SK-MEL-5 (cell line): ENCODE measurements at regions of chr1 and their contacts with region 1.

Region 1: DNA sequence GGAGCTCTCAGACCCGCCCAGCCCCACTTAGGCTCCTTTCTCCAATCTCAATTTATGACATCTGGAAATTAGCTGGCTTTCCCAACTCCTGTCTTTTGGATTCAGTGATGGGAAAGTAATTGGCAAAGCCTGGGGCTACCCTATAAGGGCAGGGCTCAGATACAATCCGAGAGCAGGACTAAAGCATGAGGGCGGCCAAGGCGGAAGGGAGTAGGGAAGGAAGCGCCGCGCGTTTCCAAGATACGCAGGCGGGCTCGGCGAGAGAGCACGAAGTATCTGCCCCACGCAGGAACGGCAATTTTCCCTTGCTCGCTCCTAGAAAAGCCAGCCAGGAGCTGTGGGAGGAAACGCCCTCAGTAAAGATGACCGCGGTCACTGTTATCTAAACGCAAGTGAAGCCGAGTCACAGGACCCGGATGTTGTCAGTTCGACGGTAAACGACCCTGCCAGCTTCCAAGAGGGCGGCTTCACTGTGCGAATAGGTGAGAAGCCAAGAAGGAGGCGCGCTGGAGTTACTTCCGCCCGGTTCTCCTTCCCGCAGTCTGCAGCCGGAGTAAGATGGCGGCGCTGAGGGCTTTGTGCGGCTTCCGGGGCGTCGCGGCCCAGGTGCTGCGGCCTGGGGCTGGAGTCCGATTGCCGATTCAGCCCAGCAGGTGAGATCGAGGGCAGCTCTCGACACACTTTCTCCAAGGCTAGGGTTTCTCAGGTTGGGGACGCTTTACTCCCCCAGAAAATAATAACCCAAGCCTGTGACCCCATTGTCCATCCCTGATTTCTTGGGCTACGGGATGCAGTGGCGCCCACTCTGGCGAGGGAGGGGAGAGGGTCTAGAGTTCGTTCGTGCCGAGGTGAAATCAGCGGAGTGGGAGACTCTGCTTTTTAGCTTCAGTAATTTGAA is at the start of gene NDUFS2:
- DNase-seq: peak; percentile 99
- total RNA-seq, gene NDUFS2: 134 and 147 TPM in 2 replicates

Region 2: GRCh38 chr1:161399257-161399998 is 197.4 kb after region 1 on chr1:
- in situ Hi-C with region 1: loop called (anchors 25 kb)
- DNase-seq: peak; percentile 94